ENCODE measurements at regions of chr11 and their contacts with region 1.

Region 1: DNA sequence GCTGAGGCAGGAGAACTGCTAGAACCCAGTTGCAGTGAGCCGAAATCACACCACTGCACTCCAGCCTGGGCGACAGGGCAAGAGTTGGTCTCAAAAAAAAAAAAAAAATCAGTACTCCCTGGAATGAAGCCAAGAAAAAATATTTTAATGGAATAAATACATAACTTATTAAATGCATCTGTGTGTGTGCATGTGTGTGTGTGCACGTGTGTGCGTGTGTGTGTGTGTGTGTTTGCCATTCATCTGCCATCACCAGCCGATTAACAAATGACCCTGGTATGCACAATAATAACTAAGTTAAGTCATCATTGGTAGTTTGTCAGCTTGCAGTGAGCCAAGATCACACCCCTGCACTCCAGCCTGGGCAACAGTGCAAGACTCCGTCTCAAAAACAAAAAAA is 35.0 kb upstream of the SCGB1A1 start:
- DNase-seq: no peak
- H3K4me3 ChIP-seq: no peak overlapping the region
- H3K27ac ChIP-seq: no peak overlapping the region
- H3K4me1 ChIP-seq: peaks cover 0 to 5% of the 10 kb centered on the region in 2 donors
- H3K27me3 ChIP-seq: no peaks in the 10 kb centered on the region
- CTCF ChIP-seq: no peak

Region 2: DNA sequence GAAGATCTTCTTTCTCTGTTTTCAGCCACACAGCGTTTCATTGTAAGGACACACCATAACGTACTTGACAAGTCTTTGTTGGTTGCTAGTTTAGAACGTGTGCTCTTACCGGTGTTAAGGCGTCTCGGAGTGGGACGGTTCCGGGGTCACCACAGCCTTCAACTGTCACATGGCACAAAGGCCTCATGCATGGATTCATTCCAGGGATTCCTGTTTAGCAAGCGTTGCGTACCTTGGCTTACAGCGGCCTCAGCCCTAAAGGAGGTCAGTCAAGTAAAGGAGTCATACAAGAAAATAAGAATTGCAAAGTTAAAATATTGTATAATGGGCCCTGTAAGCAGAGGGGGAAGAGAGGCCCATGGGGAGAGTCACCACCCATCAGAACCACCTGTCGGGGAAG is 32.8 kb after region 1 on chr11:
- intact Hi-C with region 1: loop called (anchors 2 kb)
- DNase-seq: no peak
- H3K4me3 ChIP-seq: no peak overlapping the region
- H3K27ac ChIP-seq: no peak overlapping the region
- H3K4me1 ChIP-seq: peaks cover 0 to 2% of the 10 kb centered on the region in 2 donors
- H3K27me3 ChIP-seq: no peaks in the 10 kb centered on the region
- CTCF ChIP-seq: no peak